ENCODE measurements at regions of chr9 and their contacts with region 1.

Region 1: DNA sequence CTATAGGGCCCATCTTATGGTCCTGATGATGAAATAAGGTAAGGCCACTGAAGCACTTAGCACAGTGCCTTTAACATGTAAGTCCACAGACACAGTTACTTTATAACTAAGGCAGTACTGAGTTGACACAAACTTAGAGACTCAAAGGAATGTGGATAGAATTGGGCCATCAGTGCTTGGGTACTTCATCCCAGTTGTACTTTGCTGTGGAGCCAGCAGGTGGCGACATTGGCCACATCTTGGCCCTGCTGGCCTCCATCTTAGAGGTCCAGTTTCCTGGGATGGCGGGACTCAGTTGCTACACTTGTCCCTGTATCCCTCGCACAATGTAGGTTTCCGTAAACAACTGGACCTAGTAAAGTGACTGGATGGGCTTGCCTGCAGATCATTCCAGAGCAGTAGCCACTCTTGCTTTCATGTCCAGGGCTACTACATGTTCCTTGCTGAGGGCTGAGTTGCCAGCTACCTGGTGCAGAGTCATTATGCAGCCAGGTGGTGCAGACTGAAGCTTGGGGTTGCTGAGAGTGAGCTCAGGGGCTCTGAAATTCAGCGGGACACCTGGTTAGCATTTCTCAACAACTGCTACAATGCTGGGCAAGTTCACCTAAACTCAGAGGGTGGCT is 10.6 kb downstream of the MTAP start:
- DNase-seq: no peak
- H3K4me3 ChIP-seq: no peak overlapping the region
- H3K27ac ChIP-seq: peak overlapping the region; percentile 12 to 62 (median 36)
- H3K4me1 ChIP-seq: peaks cover 0 to 63% (median 15%) of the 10 kb centered on the region in 3 donors
- H3K27me3 ChIP-seq: no peaks in the 10 kb centered on the region
- CTCF ChIP-seq: peak; percentile 67 to 94 (median 88)
- POLR2A ChIP-seq: no peak

Region 2: DNA sequence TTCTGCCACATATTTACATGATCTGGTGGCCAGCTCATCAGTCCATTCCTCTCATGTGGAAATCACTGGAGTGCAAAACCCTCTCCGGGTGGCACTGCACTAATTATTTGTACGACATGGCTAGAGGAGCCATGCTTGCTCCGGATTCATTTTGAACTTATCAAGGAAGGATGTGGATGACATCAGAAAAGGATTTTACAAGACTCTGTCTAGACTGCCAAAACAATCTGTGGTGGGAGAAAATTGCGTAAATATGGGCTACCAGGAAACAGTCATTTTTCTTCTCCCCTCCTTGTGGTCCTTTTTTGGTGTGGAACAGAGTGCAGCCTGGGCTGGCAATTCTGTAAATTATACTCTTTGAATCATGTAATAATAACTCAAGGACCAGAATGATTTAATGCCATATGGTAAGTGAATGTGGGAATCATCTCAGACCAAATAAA is 207.5 kb before region 1 on chr9:
- intact Hi-C with region 1: no loop called
- DNase-seq: no peak
- H3K4me3 ChIP-seq: no peak overlapping the region
- H3K27ac ChIP-seq: no peak overlapping the region
- H3K4me1 ChIP-seq: peaks cover 0 to 3% (median 0%) of the 10 kb centered on the region in 3 donors
- H3K27me3 ChIP-seq: no peaks in the 10 kb centered on the region
- CTCF ChIP-seq: no peak
- POLR2A ChIP-seq: no peak

Region 3: DNA sequence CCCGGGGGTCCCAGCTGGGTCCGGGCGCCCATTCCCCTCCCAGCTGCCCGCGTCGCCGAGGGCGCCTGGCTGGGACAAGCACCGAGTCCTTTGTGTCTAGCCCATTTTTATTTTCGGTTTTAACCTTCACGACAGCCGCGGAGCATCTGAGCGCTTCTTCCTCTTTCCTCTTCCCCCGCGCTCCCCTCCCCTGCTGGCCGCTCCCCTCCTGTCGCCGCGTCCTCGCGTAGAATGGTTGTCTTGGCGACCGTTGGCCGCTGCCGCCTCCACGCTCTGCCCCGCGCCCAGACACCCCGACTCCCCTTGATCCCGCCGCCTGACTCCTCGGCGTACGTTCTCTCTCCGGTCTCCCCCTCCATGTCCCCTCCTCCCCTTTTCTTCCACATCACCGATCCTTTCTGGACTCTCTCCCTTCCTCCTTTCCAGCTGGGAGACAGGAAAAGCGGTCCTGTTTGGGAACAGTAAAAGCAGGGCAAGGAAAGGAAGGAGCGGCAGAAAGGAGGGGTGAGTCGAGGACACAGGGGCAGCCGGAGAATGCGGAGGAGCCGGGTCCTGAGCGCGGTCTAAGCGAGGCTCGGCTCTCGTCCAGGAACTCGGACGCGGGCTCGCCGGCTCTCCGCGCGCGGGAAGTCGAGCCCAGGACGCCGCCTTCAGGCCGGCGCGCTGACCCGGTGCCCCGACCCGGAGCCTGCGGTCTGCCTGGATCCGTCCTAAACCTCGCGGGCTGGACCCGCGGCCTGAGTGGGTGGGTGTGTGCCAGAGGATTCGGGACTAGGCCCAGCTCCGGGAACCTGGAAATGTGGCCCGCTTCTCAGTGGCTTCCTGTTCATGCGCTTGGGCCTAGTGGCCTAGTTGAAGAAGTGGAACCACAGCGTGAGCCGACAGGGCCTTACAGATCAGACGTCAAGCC is 182.4 kb after region 1 on chr9:
- intact Hi-C with region 1: loop called (anchors 10 kb)
- DNase-seq: peak; percentile 58
- H3K4me3 ChIP-seq: peak overlapping the region; percentile 76 to 90 (median 78)
- H3K27ac ChIP-seq: peak overlapping the region; percentile 81 to 92 (median 84)
- H3K4me1 ChIP-seq: peaks cover 4 to 28% (median 5%) of the 10 kb centered on the region in 3 donors
- H3K27me3 ChIP-seq: peaks cover 0 to 79% (median 0%) of the 10 kb centered on the region in 4 donors
- CTCF ChIP-seq: peak in 2 of 6 experiments; percentile 16 to 22
- POLR2A ChIP-seq: peak in 1 of 4 donors; percentile 58

Region 4: DNA sequence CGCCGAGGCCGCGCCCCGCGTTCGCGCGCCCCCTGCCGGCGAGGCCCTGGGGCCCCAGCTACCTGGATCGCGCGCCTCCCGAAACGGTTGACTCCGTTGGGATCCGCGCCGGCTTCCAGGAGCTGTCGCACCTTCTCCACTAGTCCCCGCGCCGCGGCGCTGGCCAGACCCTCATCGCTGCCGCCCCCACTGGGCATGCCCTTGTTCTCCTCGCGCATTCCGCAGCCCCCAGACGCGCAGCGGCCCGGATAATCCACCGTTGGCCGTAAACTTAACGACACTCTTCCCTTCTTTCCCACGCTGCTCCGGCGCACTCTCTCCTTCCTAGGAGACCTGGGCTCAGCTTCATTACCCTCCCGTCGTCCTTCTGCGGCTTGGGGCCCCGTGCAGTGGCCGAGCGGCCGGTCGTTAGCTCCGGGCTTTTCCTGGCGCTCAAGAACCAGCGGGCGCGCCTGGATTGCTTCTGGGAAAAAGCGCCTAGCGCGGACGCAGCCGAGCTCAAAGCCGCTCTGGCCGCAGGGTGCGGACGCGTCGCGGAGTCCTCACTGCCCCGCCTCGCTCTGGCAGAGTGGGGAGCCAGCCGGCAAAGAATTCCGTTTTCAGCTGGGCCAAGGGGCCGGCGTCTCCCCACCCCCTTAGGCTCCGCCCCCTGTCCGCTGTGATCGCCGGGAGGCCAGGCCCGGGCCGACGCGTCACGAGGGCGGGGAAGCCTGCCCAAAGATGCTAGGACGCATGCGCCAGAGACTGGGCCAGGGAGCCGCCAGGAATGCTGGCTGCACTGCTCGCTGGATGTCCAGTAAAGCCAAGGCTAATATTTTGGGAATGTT is 195.9 kb after region 1 on chr9 and contains the start of gene CDKN2B:
- intact Hi-C with region 1: no loop called
- DNase-seq: peak; percentile 27
- H3K4me3 ChIP-seq: peak within 1 kb of the TSS; percentile 66 to 82 (median 72)
- H3K27ac ChIP-seq: peak within 1 kb of the TSS; percentile 89 to 93 (median 92)
- H3K4me1 ChIP-seq: peaks cover 8 to 64% (median 12%) of the 10 kb centered on the region in 3 donors
- H3K27me3 ChIP-seq: peaks cover 0 to 92% (median 17%) of the 10 kb centered on the region in 4 donors
- CTCF ChIP-seq: peak; percentile 81 to 97 (median 90)
- POLR2A ChIP-seq: peak in 3 of 4 donors; percentile 61 to 79 (median 74)
- total RNA-seq, gene CDKN2B: 41.6 to 150 (median 87.6) TPM

Region 5: DNA sequence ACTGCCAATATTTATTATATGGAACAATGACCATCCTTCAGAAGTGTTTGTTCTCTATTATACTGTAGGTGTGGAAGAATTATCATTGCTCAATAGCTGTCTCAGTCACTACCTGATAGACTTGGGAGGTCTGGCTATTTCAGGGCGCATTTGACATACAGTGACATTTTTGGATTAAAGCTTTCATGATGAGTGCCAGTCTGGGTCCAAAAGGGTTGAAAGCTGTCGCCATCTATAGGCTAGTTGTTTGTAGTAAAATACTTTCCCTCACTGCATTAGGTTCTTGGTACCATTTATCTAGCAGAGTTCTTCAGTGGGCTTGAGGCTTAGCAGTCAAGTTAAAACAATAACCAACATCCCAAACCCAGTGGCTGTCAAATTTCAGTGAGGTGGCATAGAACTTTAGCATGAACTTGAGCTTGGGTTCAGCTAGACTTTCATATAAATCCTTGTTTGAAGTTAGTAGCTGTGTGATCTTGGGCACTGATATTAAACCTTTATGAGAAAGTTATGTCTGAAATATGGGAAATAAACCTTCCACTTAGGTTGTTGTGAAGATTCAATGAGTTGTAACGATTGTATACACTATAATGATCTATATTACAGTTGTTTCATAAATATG is 306.6 kb after region 1 on chr9:
- intact Hi-C with region 1: loop called (anchors 10 kb)
- DNase-seq: no peak
- H3K4me3 ChIP-seq: no peak overlapping the region
- H3K27ac ChIP-seq: peak overlapping the region in 2 of 4 donors; percentile 20 to 69
- H3K4me1 ChIP-seq: peaks cover 0 to 26% (median 11%) of the 10 kb centered on the region in 3 donors
- H3K27me3 ChIP-seq: no peaks in the 10 kb centered on the region
- CTCF ChIP-seq: peak in 5 of 6 experiments; percentile 33 to 56 (median 42)
- POLR2A ChIP-seq: no peak

Region 6: GRCh38 chr9:22238809-22239684 is 426.0 kb after region 1 on chr9:
- intact Hi-C with region 1: loop called (anchors 10 kb)
- DNase-seq: no peak
- H3K4me3 ChIP-seq: no peak overlapping the region
- H3K27ac ChIP-seq: no peak overlapping the region
- H3K4me1 ChIP-seq: peaks cover 0 to 17% (median 0%) of the 10 kb centered on the region in 3 donors
- H3K27me3 ChIP-seq: no peaks in the 10 kb centered on the region
- CTCF ChIP-seq: peak in 4 of 6 experiments; percentile 14 to 45 (median 34)
- POLR2A ChIP-seq: no peak